BJ (cell line): ENCODE measurements at regions of chr1 and their contacts with region 1.

Region 1: GRCh38 chr1:35641233-35641866 is at the start of gene PSMB2:
- DNase-seq: peak; percentile 59
- H3K4me3 ChIP-seq: peak within 1 kb of the TSS; percentile 88
- H3K27me3 ChIP-seq: peaks cover 13% of the 10 kb centered on the region
- CTCF ChIP-seq: no peak
- polyA plus RNA-seq, gene PSMB2: 82.3 and 99.2 TPM in 2 replicates

Region 2: GRCh38 chr1:35788139-35788538 is 146.8 kb after region 1 on chr1:
- CTCF ChIA-PET with region 1: no interaction called
- POLR2A ChIA-PET with region 1: interaction called, 13 read pairs
- DNase-seq: no peak
- H3K4me3 ChIP-seq: no peak overlapping the region
- H3K27me3 ChIP-seq: no peaks in the 10 kb centered on the region
- CTCF ChIP-seq: no peak